ENCODE measurements at regions of chr16 and their contacts with region 1.

Region 1: GRCh38 chr16:68310761-68311511 is at the starts of genes PRMT7 and SLC7A6OS:
- DNase-seq: peak; percentile 90 to 94 (median 92)
- H3K4me3 ChIP-seq: peak within 1 kb of the TSS; percentile 95
- H3K4me3 Mint-ChIP-seq: peak within 1 kb of the TSS; percentile 90 to 99 (median 98)
- H3K27ac ChIP-seq: peak within 1 kb of the TSS; percentile 83
- H3K27ac Mint-ChIP-seq: peak within 1 kb of the TSS; percentile 92 to 98 (median 98)
- H3K4me1 ChIP-seq: peaks cover 43% of the 10 kb centered on the region
- H3K4me1 Mint-ChIP-seq: peaks cover 44 to 63% (median 53%) of the 10 kb centered on the region in 3 donors
- H3K27me3 ChIP-seq: no peaks in the 10 kb centered on the region
- H3K27me3 Mint-ChIP-seq: no peaks in the 10 kb centered on the region
- total RNA-seq, gene PRMT7: 61.1 to 67.5 TPM
- total RNA-seq, gene SLC7A6OS: 21.8 to 25.5 TPM

Region 2: GRCh38 chr16:68275611-68276191 is 35.2 kb before region 1 on chr16:
- CTCF ChIA-PET with region 1: interaction called, 6 read pairs
- POLR2A ChIA-PET with region 1: interaction called, 15 read pairs
- DNase-seq: peak; percentile 19 to 85 (median 63)
- H3K4me3 ChIP-seq: peak overlapping the region; percentile 42
- H3K4me3 Mint-ChIP-seq: peak overlapping the region; percentile 36 to 80 (median 74)
- H3K27ac ChIP-seq: no peak overlapping the region
- H3K27ac Mint-ChIP-seq: peak overlapping the region; percentile 89 to 99 (median 96)
- H3K4me1 ChIP-seq: peaks cover 81% of the 10 kb centered on the region
- H3K4me1 Mint-ChIP-seq: peaks cover 58 to 72% (median 72%) of the 10 kb centered on the region in 3 donors
- H3K27me3 ChIP-seq: no peaks in the 10 kb centered on the region
- H3K27me3 Mint-ChIP-seq: peaks cover 0 to 2% of the 10 kb centered on the region in 2 donors

Region 3: DNA sequence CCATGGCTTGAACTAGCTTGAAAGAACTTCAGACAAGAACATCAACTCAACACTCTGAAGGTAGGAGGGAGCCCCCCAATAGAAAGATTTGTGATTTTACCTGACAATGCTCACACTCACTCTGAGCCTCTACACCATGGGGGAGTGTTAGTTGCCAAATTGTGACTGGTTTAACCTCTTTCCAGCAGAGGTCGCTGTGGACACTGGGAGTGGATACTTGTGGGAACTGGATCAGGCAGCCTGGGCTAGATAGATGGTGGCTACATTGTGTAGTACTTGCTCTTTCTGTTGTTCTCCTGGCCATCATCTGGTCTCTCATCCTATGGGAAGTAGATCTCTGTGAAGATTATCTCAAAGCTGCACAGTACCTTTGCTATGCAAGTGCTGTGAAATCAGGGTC is 134.5 kb after region 1 on chr16:
- CTCF ChIA-PET with region 1: no interaction called
- POLR2A ChIA-PET with region 1: no interaction called
- DNase-seq: no peak
- H3K4me3 ChIP-seq: no peak overlapping the region
- H3K4me3 Mint-ChIP-seq: peak overlapping the region in 3 of 7 donors; percentile 23 to 46 (median 27)
- H3K27ac ChIP-seq: no peak overlapping the region
- H3K27ac Mint-ChIP-seq: no peak overlapping the region
- H3K4me1 ChIP-seq: peaks cover 27% of the 10 kb centered on the region
- H3K4me1 Mint-ChIP-seq: peaks cover 14 to 28% (median 16%) of the 10 kb centered on the region in 3 donors
- H3K27me3 ChIP-seq: peaks cover 30% of the 10 kb centered on the region
- H3K27me3 Mint-ChIP-seq: peaks cover 36 to 56% of the 10 kb centered on the region in 2 donors

Region 4: DNA sequence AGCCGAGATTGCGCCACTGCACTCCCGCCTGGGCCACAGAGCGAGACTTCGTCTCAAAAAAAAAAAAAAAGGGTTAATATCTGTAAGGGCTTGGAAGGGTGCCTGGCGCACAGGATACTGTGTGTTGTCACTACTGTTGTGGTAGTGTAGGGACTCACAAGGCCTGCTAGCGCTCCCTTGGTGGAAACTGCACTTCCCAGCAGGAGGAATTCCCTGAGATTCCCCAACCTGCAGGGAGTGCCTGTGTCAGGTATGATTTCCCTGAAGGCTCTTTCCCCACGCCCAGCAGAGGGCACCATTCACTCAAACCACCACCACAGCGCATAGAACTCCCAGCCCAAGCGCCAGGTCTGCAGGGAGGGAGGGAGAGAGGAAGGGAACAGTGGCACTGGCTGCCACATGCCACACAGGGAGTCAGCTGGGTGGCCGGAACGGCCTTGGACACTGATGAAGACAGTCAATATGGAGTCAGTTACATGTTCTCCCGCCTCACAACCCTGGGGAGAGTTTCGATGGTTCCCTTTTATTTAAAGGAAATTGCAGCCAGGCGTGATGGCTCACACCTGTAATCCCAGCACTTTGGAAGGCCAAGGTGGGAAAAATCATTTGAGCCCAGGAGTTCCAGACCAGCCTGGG is 393.4 kb after region 1 on chr16:
- CTCF ChIA-PET with region 1: no interaction called
- POLR2A ChIA-PET with region 1: no interaction called
- DNase-seq: peak; percentile 17 to 67 (median 29)
- H3K4me3 ChIP-seq: no peak overlapping the region
- H3K4me3 Mint-ChIP-seq: no peak overlapping the region
- H3K27ac ChIP-seq: no peak overlapping the region
- H3K27ac Mint-ChIP-seq: no peak overlapping the region
- H3K4me1 ChIP-seq: no peaks in the 10 kb centered on the region
- H3K4me1 Mint-ChIP-seq: peaks cover 0 to 4% (median 0%) of the 10 kb centered on the region in 3 donors
- H3K27me3 ChIP-seq: no peaks in the 10 kb centered on the region
- H3K27me3 Mint-ChIP-seq: peaks cover 0 to 2% of the 10 kb centered on the region in 2 donors